ENCODE measurements at regions of chr1 and their contacts with region 1.

Region 1: GRCh38 chr1:98516306-98516705 is 145.2 kb upstream of the SNX7 start:
- DNase-seq: no peak
- ATAC-seq: no peak
- H3K4me3 Mint-ChIP-seq: no peak overlapping the region
- H3K27ac Mint-ChIP-seq: no peak overlapping the region
- H3K4me1 Mint-ChIP-seq: no peaks in the 10 kb centered on the region
- H3K27me3 Mint-ChIP-seq: no peaks in the 10 kb centered on the region

Region 2: DNA sequence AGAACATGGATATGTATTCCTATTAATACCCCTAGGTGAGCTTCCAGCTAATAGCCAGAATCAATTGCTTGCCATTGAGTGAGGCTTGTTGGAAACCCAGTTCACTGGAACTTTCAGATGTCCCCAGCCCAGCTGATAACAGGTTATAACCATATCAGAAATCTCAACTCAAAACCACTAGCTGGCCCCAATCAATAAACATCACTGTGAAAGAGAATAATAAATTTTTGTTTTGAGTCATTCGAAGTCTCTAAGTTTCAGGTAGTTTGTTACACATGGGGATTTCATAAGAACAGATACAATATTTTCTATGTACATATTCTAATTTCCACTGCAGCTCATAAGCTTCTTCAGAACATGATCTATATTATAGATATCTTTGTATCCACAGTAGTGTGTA is 17.7 kb before region 1 on chr1:
- CTCF ChIA-PET with region 1: no interaction called
- POLR2A ChIA-PET with region 1: no interaction called
- intact Hi-C with region 1: loop called in 1 of 2 experiments (anchors 1 kb)
- DNase-seq: no peak
- ATAC-seq: no peak
- H3K4me3 Mint-ChIP-seq: no peak overlapping the region
- H3K27ac Mint-ChIP-seq: no peak overlapping the region
- H3K4me1 Mint-ChIP-seq: no peaks in the 10 kb centered on the region
- H3K27me3 Mint-ChIP-seq: no peaks in the 10 kb centered on the region

Measured in activated CD4-positive, alpha-beta T cell treated with anti-CD3 and anti-CD28 coated beads for 36 hours (primary cell).